ENCODE measurements at regions of chr7 and their contacts with region 1.

Region 1: GRCh38 chr7:50467817-50468610 is 17.9 kb upstream of the FIGNL1 start:
- DNase-seq: peak; percentile 52 to 86 (median 73)
- ATAC-seq: peak; percentile 95 to 99 (median 96)
- H3K4me3 ChIP-seq: peak overlapping the region; percentile 4 to 15
- H3K4me3 Mint-ChIP-seq: peak overlapping the region; percentile 40 to 70 (median 54)
- H3K27ac ChIP-seq: no peak overlapping the region
- H3K27ac Mint-ChIP-seq: peak overlapping the region in 1 of 2 donors; percentile 68
- H3K4me1 ChIP-seq: peaks cover 0 to 11% of the 10 kb centered on the region in 2 experiments
- H3K4me1 Mint-ChIP-seq: peaks cover 10 to 12% (median 10%) of the 10 kb centered on the region in 3 donors
- H3K27me3 ChIP-seq: peaks cover 0 to 14% of the 10 kb centered on the region in 2 experiments
- H3K27me3 Mint-ChIP-seq: peaks cover 0 to 6% of the 10 kb centered on the region in 2 donors

Region 2: DNA sequence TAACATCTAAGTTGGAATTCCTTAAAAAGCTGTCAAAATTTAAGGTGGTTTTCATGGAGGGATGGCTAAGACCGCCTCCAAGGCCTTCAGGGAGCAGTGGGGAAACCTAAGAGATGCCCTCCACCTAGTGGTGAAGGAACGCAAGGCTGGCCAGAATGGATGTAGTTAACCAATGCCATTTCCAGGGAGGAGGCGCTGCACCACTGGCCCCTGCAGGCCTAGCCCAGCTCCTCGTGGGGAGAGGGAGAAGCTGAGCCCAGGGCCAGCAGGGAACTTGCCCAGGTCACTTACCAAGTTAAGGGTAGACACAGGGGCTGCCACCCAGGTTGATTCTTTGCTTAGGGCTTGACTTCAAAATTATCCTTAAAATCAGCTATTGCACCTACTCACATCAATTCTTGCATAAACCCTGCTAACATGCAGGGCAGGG is 49.9 kb before region 1 on chr7:
- CTCF ChIA-PET with region 1: no interaction called
- POLR2A ChIA-PET with region 1: interaction called in 1 of 2 experiments, 17 read pairs
- DNase-seq: peak; percentile 28 to 84 (median 56)
- ATAC-seq: peak; percentile 84 to 92 (median 90)
- H3K4me3 ChIP-seq: no peak overlapping the region
- H3K4me3 Mint-ChIP-seq: no peak overlapping the region
- H3K27ac ChIP-seq: no peak overlapping the region
- H3K27ac Mint-ChIP-seq: no peak overlapping the region
- H3K4me1 ChIP-seq: peaks cover 8 to 18% of the 10 kb centered on the region in 2 experiments
- H3K4me1 Mint-ChIP-seq: peaks cover 24 to 34% (median 25%) of the 10 kb centered on the region in 3 donors
- H3K27me3 ChIP-seq: no peaks in the 10 kb centered on the region
- H3K27me3 Mint-ChIP-seq: no peaks in the 10 kb centered on the region

Region 3: DNA sequence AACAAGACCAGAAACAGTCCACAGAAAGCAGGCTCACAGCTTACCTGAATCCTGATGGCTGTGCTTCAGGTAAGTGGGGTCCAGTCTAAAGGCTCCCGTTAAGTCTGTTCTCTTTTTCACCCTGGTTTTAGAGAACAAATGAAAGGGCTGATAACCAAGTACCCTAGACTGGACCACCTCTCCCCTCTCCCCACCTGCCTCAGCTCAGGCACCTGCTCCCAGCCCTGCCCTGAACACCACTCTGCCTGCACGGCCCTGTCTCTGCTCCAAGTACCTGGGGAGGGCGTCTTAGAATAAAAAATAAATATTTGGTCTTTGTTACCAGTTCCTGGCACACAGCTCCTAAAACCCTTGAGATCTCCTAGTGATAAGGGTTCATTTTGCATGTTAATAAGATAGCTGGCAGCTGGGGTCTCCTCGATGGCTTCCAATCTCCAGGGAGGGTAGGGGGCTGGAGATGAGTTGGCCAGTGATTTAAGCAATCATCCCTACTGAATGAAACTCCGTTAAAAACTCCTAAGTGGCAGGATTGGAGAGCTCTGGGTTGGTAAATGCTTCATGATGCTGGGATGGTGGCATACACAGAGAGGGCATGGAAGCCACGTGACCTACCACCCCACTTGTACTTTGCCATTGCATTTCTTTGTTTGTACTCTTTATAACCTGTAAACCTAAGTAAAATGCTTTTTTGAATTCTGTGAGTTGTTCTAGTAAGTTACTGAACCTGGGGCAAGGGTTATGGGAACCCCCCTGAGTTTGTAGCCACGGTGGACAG is 11.9 kb after region 1 on chr7:
- CTCF ChIA-PET with region 1: no interaction called
- POLR2A ChIA-PET with region 1: no interaction called
- DNase-seq: no peak
- ATAC-seq: no peak
- H3K4me3 ChIP-seq: no peak overlapping the region
- H3K4me3 Mint-ChIP-seq: no peak overlapping the region
- H3K27ac ChIP-seq: no peak overlapping the region
- H3K27ac Mint-ChIP-seq: no peak overlapping the region
- H3K4me1 ChIP-seq: no peaks in the 10 kb centered on the region
- H3K4me1 Mint-ChIP-seq: no peaks in the 10 kb centered on the region
- H3K27me3 ChIP-seq: peaks cover 0 to 15% of the 10 kb centered on the region in 2 experiments
- H3K27me3 Mint-ChIP-seq: peaks cover 0 to 5% of the 10 kb centered on the region in 2 donors

Region 4: DNA sequence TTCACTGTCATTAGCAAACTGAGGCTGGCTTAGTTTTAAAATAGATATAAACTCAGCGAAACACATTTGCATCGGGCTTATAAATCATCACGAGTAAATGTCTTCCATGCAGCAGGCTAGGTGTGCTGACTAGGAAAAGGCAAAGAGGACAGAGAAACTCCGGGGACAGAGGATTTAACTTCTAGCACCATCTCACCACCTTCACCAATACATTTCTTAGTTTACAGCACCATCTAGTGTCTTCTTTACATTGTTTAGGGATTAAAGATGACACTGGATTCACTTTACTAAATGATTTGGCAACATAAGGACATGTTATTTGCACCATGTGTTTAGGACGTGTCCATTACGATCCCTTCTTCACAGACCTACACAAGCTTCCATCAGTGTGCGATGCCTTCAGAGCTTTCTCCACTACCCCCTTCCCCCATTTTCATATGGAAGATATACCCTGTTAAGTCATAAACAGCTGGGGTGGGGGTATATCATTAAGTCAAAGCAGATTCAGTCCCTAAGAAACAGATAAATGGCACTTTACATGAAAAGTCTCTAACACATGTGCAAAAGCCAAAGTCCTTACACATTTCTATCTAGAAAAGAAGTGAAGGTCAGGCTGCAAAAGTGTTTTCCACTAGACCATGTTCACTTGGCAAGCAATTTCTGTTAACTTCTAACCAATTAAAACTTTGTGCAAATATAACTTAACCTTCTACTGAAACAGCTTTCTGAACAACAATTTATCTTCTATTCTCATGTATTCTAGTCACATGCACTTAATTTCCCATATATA is 211.4 kb after region 1 on chr7:
- CTCF ChIA-PET with region 1: interaction called, 7 to 18 read pairs
- POLR2A ChIA-PET with region 1: no interaction called
- DNase-seq: peak in 1 of 35 experiments; percentile 73
- ATAC-seq: peak; percentile 58 to 75 (median 66)
- H3K4me3 ChIP-seq: no peak overlapping the region
- H3K4me3 Mint-ChIP-seq: no peak overlapping the region
- H3K27ac ChIP-seq: no peak overlapping the region
- H3K27ac Mint-ChIP-seq: no peak overlapping the region
- H3K4me1 ChIP-seq: no peaks in the 10 kb centered on the region
- H3K4me1 Mint-ChIP-seq: peaks cover 0 to 2% (median 0%) of the 10 kb centered on the region in 3 donors
- H3K27me3 ChIP-seq: peaks cover 0 to 6% of the 10 kb centered on the region in 2 experiments
- H3K27me3 Mint-ChIP-seq: peaks cover 0 to 7% of the 10 kb centered on the region in 2 donors

Region 5: GRCh38 chr7:51162724-51163329 is 694.8 kb after region 1 on chr7:
- CTCF ChIA-PET with region 1: interaction called, 18 to 19 read pairs
- POLR2A ChIA-PET with region 1: no interaction called
- DNase-seq: peak in 34 of 35 experiments; percentile 22 to 68 (median 44)
- ATAC-seq: peak; percentile 67 to 76 (median 72)
- H3K4me3 ChIP-seq: no peak overlapping the region
- H3K4me3 Mint-ChIP-seq: no peak overlapping the region
- H3K27ac ChIP-seq: no peak overlapping the region
- H3K27ac Mint-ChIP-seq: no peak overlapping the region
- H3K4me1 ChIP-seq: peaks cover 0 to 2% of the 10 kb centered on the region in 2 experiments
- H3K4me1 Mint-ChIP-seq: peaks cover 4 to 7% (median 6%) of the 10 kb centered on the region in 3 donors
- H3K27me3 ChIP-seq: no peaks in the 10 kb centered on the region
- H3K27me3 Mint-ChIP-seq: peaks cover 14 to 22% of the 10 kb centered on the region in 2 donors

Measured in T-cell (primary cell).